ENCODE measurements at regions of chr10 and their contacts with region 1.

Region 1: DNA sequence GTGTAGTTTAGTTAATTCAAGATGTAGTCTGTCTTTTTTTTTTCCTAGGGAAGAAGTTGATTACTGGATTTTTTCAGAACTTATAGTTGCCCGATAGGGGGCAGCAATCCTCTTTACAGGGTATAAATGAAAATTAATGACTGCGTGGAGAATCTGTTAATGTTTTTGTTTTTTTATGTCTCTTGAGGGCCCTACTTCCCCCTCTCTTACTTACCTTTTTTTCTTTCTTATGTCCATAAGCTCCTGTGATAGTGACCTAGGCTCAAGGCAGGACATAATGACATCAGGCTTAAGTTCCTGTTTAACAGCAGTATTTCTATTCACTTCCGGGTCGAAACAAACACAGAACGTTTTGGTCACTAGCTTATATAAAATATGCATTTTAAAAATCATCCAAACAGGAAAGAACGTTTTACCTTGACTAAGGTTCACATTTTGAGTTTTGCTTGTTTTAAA is 18.8 kb downstream of the CDC123 start:
- DNase-seq: peak in 4 of 5 donors; percentile 26 to 50 (median 31)
- H3K4me3 ChIP-seq: no peak overlapping the region
- H3K4me3 Mint-ChIP-seq: peak overlapping the region in 6 of 7 donors; percentile 19 to 71 (median 64)
- H3K27ac ChIP-seq: no peak overlapping the region
- H3K27ac Mint-ChIP-seq: peak overlapping the region; percentile 15 to 96 (median 84)
- H3K4me1 ChIP-seq: no peaks in the 10 kb centered on the region
- H3K4me1 Mint-ChIP-seq: peaks cover 17 to 34% (median 21%) of the 10 kb centered on the region in 3 donors
- H3K27me3 ChIP-seq: no peaks in the 10 kb centered on the region
- H3K27me3 Mint-ChIP-seq: no peaks in the 10 kb centered on the region

Region 2: DNA sequence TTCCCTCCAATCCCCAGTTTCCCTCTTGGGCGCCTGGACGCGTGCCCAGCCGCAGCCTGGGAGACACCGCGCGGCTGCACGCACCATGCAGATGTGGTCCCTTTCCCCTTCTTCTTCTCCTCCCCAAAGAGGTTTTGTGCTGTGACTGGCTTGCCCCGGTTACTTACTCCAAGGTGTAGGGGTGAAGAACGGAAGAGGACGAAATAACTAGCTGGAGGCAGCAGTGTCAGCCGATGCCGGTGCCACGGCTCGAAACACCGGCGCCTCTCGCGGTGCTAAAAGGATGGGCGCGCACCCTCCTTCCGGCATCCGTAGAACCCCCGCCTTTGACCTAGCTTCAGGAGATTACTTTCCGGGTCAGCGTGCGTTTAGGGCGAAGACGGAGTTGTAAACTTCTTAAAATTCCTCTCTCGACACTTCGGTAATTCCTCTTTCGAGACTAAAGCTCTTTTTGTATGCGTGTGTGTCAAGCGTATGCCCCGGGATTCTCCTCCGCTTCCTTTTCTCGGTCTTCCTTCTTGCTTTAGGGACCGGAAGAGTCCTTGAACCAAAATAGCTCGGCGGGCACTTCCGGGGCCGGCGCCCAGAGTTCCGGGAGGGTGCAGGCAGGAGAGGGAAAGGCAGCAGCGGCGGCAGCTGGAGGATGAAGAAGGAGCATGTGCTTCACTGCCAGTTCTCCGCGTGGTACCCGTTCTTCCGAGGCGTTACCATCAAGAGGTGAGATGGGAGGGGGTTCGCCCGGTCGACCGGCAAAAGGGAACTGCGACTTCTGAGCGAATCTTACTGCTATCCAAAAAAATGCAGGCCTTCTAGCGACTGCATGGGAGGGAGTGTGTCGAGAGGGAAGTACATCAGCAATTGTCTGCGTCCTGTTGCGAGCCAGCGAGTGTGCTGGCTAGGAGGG is 18.9 kb before region 1 on chr10 and contains the starts of genes CDC123 and NUDT5:
- CTCF ChIA-PET with region 1: interaction called, 14 read pairs
- POLR2A ChIA-PET with region 1: interaction called, 9 read pairs
- DNase-seq: peak; percentile 74 to 89 (median 82)
- H3K4me3 ChIP-seq: peak within 1 kb of the TSS; percentile 100
- H3K4me3 Mint-ChIP-seq: peak within 1 kb of the TSS; percentile 94 to 100 (median 96)
- H3K27ac ChIP-seq: peak within 1 kb of the TSS; percentile 97
- H3K27ac Mint-ChIP-seq: peak within 1 kb of the TSS; percentile 90 to 100 (median 98)
- H3K4me1 ChIP-seq: peaks cover 26% of the 10 kb centered on the region
- H3K4me1 Mint-ChIP-seq: peaks cover 51 to 77% (median 72%) of the 10 kb centered on the region in 3 donors
- H3K27me3 ChIP-seq: no peaks in the 10 kb centered on the region
- H3K27me3 Mint-ChIP-seq: no peaks in the 10 kb centered on the region
- total RNA-seq, gene CDC123: 161 to 162 TPM
- total RNA-seq, gene NUDT5: 119 to 125 TPM

Region 3: GRCh38 chr10:12299222-12299965 is 84.6 kb after region 1 on chr10:
- CTCF ChIA-PET with region 1: no interaction called
- POLR2A ChIA-PET with region 1: no interaction called
- DNase-seq: no peak
- H3K4me3 ChIP-seq: no peak overlapping the region
- H3K4me3 Mint-ChIP-seq: no peak overlapping the region
- H3K27ac ChIP-seq: no peak overlapping the region
- H3K27ac Mint-ChIP-seq: no peak overlapping the region
- H3K4me1 ChIP-seq: no peaks in the 10 kb centered on the region
- H3K4me1 Mint-ChIP-seq: no peaks in the 10 kb centered on the region
- H3K27me3 ChIP-seq: no peaks in the 10 kb centered on the region
- H3K27me3 Mint-ChIP-seq: peaks cover 2 to 9% of the 10 kb centered on the region in 2 donors

Region 4: GRCh38 chr10:12656518-12657142 is 441.8 kb after region 1 on chr10:
- CTCF ChIA-PET with region 1: interaction called, 13 read pairs
- POLR2A ChIA-PET with region 1: no interaction called
- DNase-seq: peak in 2 of 5 donors; percentile 44 to 50
- H3K4me3 ChIP-seq: no peak overlapping the region
- H3K4me3 Mint-ChIP-seq: no peak overlapping the region
- H3K27ac ChIP-seq: no peak overlapping the region
- H3K27ac Mint-ChIP-seq: no peak overlapping the region
- H3K4me1 ChIP-seq: no peaks in the 10 kb centered on the region
- H3K4me1 Mint-ChIP-seq: peaks cover 0 to 4% (median 0%) of the 10 kb centered on the region in 3 donors
- H3K27me3 ChIP-seq: no peaks in the 10 kb centered on the region
- H3K27me3 Mint-ChIP-seq: no peaks in the 10 kb centered on the region

Region 5: DNA sequence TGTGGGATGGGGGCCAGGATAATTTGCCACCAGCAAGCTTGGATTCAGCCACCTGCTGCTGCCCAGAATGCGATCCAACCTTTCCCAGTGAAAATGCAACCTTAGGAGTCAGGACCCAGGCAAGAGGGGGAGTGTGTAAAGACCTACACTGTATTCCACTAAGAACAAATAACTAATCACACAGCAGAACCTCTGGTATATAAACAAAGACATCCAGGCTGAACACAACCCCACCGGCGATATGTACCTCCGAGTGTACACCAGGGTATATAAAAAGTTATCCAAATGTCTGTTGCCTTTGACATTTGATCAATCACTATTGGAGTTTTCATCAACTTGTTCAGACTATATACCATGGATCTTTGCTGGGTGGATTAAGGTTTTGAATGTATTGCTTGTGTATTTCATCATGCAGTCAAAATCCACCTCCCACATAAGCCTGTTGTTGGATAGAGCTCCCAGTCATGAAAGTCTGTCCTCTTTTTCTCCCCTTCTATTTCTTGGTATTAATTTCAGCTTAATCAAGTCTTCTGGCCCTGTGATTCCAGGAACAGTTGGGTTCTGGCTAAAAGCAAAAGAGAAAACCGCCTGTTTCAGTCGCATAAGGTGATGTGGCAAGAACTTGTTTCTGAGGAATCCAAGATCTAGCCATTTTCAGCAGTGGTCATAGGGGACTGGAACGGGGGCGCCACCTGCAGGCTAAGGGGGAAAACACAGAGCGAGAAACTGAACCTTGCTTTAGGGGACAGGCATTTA is 496.0 kb after region 1 on chr10:
- CTCF ChIA-PET with region 1: interaction called, 10 read pairs
- POLR2A ChIA-PET with region 1: no interaction called
- DNase-seq: peak; percentile 45 to 71 (median 58)
- H3K4me3 ChIP-seq: no peak overlapping the region
- H3K4me3 Mint-ChIP-seq: no peak overlapping the region
- H3K27ac ChIP-seq: no peak overlapping the region
- H3K27ac Mint-ChIP-seq: peak overlapping the region in 1 of 8 donors; percentile 1
- H3K4me1 ChIP-seq: no peaks in the 10 kb centered on the region
- H3K4me1 Mint-ChIP-seq: peaks cover 1 to 5% (median 3%) of the 10 kb centered on the region in 3 donors
- H3K27me3 ChIP-seq: no peaks in the 10 kb centered on the region
- H3K27me3 Mint-ChIP-seq: peaks cover 0 to 1% of the 10 kb centered on the region in 2 donors